Activated B cell treated with CpG ODN at 0.5 μM for 24 hours (primary cell): ENCODE measurements at regions of chr20 and their contacts with region 1.

Region 1: GRCh38 chr20:47411161-47411560 is 54.7 kb upstream of the ZMYND8 start:
- DNase-seq: no peak
- ATAC-seq: no peak
- H3K4me3 Mint-ChIP-seq: peak overlapping the region; percentile 81
- H3K27ac Mint-ChIP-seq: peak overlapping the region; percentile 100
- H3K4me1 Mint-ChIP-seq: peaks cover 85% of the 10 kb centered on the region
- H3K27me3 Mint-ChIP-seq: no peaks in the 10 kb centered on the region
- CTCF ChIP-seq: no peak

Region 2: GRCh38 chr20:47099825-47100441 is 311.2 kb before region 1 on chr20:
- CTCF ChIA-PET with region 1: no interaction called
- POLR2A ChIA-PET with region 1: no interaction called
- intact Hi-C with region 1: no loop called
- DNase-seq: no peak
- ATAC-seq: no peak
- H3K4me3 Mint-ChIP-seq: no peak overlapping the region
- H3K27ac Mint-ChIP-seq: no peak overlapping the region
- H3K4me1 Mint-ChIP-seq: no peaks in the 10 kb centered on the region
- H3K27me3 Mint-ChIP-seq: peaks cover 10% of the 10 kb centered on the region
- CTCF ChIP-seq: no peak

Region 3: DNA sequence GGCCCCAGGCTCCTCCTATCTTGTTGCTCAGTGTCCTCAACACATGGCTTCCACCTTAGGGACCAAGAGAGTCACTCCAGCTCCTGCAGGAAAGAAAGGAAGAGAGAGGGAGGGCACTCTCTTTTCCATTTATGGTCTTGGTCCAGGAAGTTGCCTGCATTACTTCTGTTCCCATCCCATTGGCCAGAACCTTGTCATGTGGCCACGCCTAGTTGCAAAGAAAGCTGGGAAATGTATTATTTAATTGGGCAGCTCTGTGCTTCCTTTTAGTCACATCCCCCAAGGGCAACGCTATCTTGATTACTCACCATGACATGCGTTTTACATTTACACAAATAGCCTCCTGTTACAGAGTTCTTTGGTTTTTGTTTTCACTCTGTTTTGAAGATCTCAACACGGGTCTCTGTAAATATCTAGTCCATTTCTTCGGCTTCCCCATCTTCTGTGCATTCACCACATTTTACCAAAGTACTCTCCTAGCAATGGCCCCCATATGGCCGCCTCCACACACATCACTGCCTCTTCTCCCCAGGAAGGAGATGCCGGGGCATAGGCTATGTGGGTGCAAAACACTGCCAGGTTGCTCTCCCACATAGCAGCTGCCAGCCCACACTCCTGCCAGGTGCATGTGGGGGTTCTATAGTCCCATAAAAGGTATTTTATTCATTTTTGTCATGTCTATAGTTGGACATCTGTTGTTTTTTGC is 19.0 kb before region 1 on chr20:
- CTCF ChIA-PET with region 1: interaction called, 10 read pairs
- POLR2A ChIA-PET with region 1: interaction called, 174 read pairs
- intact Hi-C with region 1: loop called (anchors 1 kb)
- DNase-seq: no peak
- ATAC-seq: peak; percentile 74
- H3K4me3 Mint-ChIP-seq: peak overlapping the region; percentile 55
- H3K27ac Mint-ChIP-seq: peak overlapping the region; percentile 95
- H3K4me1 Mint-ChIP-seq: peaks cover 47% of the 10 kb centered on the region
- H3K27me3 Mint-ChIP-seq: no peaks in the 10 kb centered on the region
- CTCF ChIP-seq: no peak

Region 4: DNA sequence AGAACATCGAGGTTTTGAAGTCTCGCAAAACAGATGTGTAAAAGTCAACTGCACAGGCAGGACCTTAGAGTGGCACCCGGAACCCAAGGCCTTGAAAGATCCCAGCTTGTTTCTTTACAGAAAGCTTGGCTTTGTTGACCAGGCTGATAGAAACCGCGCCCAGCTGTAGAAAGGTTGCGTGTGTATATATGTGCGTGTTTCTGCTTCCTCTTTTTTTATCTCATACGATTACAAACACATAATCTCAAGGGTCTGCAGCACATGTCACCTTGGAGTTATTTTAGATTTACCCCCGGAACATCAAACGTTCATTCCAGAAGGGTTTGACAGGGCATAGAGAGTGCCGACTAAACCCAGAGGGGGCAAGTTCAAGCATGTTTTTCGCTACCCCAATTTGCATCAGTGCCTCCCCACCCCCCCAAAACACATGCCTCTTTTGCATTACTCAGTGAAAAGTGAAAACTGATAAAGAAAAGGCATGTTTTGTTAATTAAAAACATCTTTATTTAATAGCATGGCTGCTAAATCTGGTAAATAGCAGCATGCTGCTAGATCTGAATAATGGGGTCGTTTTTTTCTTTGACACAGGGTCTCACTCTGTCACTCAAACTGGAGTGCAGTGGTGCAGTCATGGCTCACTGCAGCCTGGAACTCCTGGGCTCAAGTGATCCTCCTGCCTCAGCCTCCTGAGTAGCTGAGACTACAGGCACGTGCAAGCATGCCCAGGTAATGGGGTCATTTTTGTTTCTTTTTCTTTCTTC is 57.3 kb after region 1 on chr20:
- CTCF ChIA-PET with region 1: interaction called, 6 read pairs
- POLR2A ChIA-PET with region 1: interaction called, 142 read pairs
- intact Hi-C with region 1: loop called (anchors 1 kb)
- DNase-seq: peak; percentile 35
- ATAC-seq: peak; percentile 80
- H3K4me3 Mint-ChIP-seq: peak overlapping the region; percentile 50
- H3K27ac Mint-ChIP-seq: peak overlapping the region; percentile 94
- H3K4me1 Mint-ChIP-seq: peaks cover 64% of the 10 kb centered on the region
- H3K27me3 Mint-ChIP-seq: no peaks in the 10 kb centered on the region
- CTCF ChIP-seq: no peak

Region 5: GRCh38 chr20:47493175-47493962 is 82.2 kb after region 1 on chr20:
- CTCF ChIA-PET with region 1: no interaction called
- POLR2A ChIA-PET with region 1: interaction called, 234 read pairs
- intact Hi-C with region 1: no loop called
- DNase-seq: no peak
- ATAC-seq: peak; percentile 60
- H3K4me3 Mint-ChIP-seq: peak overlapping the region; percentile 39
- H3K27ac Mint-ChIP-seq: peak overlapping the region; percentile 57
- H3K4me1 Mint-ChIP-seq: peaks cover 72% of the 10 kb centered on the region
- H3K27me3 Mint-ChIP-seq: no peaks in the 10 kb centered on the region
- CTCF ChIP-seq: no peak

Region 6: GRCh38 chr20:47568001-47568407 is 156.8 kb after region 1 on chr20:
- CTCF ChIA-PET with region 1: no interaction called
- POLR2A ChIA-PET with region 1: interaction called, 10 read pairs
- intact Hi-C with region 1: no loop called
- DNase-seq: no peak
- ATAC-seq: no peak
- H3K4me3 Mint-ChIP-seq: no peak overlapping the region
- H3K27ac Mint-ChIP-seq: no peak overlapping the region
- H3K4me1 Mint-ChIP-seq: peaks cover 83% of the 10 kb centered on the region
- H3K27me3 Mint-ChIP-seq: no peaks in the 10 kb centered on the region
- CTCF ChIP-seq: no peak